Activated CD4-positive, alpha-beta T cell treated with anti-CD3 and anti-CD28 coated beads, Interleukin-2, amount 10 ng/mL, durations not matched to agents 24 days and 14 days (primary cell): ENCODE measurements at regions of chr6 and their contacts with region 1.

Region 1: GRCh38 chr6:149545754-149546528 is at the start of gene PPIL4:
- DNase-seq: peak; percentile 99
- H3K4me3 Mint-ChIP-seq: peak within 1 kb of the TSS; percentile 94
- H3K27ac Mint-ChIP-seq: peak within 1 kb of the TSS; percentile 98
- H3K4me1 Mint-ChIP-seq: peaks cover 22% of the 10 kb centered on the region
- H3K27me3 Mint-ChIP-seq: peaks cover 10% of the 10 kb centered on the region
- total RNA-seq, gene PPIL4: 24.2 and 28.4 TPM in 2 replicates

Region 2: GRCh38 chr6:149387779-149388512 is 158.0 kb before region 1 on chr6:
- intact Hi-C with region 1: no loop called
- DNase-seq: no peak
- H3K4me3 Mint-ChIP-seq: no peak overlapping the region
- H3K27ac Mint-ChIP-seq: peak overlapping the region; percentile 72
- H3K4me1 Mint-ChIP-seq: peaks cover 59% of the 10 kb centered on the region
- H3K27me3 Mint-ChIP-seq: no peaks in the 10 kb centered on the region

Region 3: DNA sequence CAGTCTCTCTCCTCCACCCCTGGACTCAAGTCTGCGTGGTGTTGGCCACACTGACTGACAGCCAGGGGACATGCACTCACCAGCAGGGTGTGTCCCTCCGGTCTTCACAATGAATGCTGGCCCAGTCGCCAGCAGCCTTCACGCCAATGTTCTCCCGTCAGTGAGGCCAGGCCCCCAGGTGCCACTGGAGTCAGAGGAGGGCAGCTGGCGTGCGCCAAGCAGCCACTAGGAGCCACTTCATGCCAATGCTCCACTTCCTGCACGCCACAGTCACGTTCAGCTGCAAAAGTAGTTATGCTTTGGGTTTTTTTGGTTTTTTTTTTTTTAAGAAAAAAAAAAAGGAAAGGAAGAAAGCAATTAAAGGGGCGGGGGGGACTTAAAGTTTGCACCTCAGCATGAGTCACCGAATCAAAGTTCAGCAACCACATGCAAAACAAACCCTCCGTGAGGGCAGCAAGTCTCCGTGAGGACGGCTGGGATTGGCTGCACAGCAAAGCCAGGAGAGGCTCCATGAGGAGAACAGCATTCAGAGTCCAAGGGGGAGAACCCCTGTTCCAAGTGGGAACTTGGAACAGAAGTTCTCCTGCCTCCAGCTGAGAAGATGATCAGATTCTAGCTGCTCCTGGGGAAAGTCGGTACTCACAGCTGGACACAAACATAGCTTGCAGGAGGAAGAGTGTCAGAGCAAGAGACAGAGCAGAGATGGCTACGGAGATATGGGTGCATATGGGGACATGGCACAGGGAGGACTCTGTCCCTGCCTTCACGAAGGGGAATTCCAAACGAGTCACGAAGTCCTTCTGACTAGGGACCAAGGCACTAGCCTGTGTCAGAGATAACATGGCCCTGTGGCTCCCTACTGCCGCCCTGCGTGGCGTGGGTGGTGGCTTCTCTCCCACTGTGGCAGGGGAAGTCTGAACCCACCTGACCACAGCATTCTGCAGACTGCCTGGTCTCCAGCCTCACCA is 60.9 kb before region 1 on chr6 and contains the start of gene ZC3H12D:
- intact Hi-C with region 1: loop called (anchors 1 kb)
- DNase-seq: peak; percentile 94
- H3K4me3 Mint-ChIP-seq: peak within 1 kb of the TSS; percentile 90
- H3K27ac Mint-ChIP-seq: peak within 1 kb of the TSS; percentile 100
- H3K4me1 Mint-ChIP-seq: peaks cover 60% of the 10 kb centered on the region
- H3K27me3 Mint-ChIP-seq: no peaks in the 10 kb centered on the region
- total RNA-seq, gene ZC3H12D: 79.6 and 79.8 TPM in 2 replicates

Region 4: GRCh38 chr6:149648148-149649145 is 102.5 kb after region 1 on chr6 and contains the start of gene KATNA1:
- intact Hi-C with region 1: loop called (anchors 5 kb)
- DNase-seq: peak; percentile 97
- H3K4me3 Mint-ChIP-seq: peak within 1 kb of the TSS; percentile 85
- H3K27ac Mint-ChIP-seq: peak within 1 kb of the TSS; percentile 87
- H3K4me1 Mint-ChIP-seq: peaks cover 23% of the 10 kb centered on the region
- H3K27me3 Mint-ChIP-seq: no peaks in the 10 kb centered on the region
- total RNA-seq, gene KATNA1: 18.9 and 23.0 TPM in 2 replicates

Region 5: GRCh38 chr6:149717588-149718458 is 171.9 kb after region 1 on chr6 and contains the start of gene LATS1:
- intact Hi-C with region 1: loop called (anchors 1 kb)
- DNase-seq: peak; percentile 98
- H3K4me3 Mint-ChIP-seq: peak within 1 kb of the TSS; percentile 98
- H3K27ac Mint-ChIP-seq: peak within 1 kb of the TSS; percentile 98
- H3K4me1 Mint-ChIP-seq: peaks cover 32% of the 10 kb centered on the region
- H3K27me3 Mint-ChIP-seq: no peaks in the 10 kb centered on the region
- total RNA-seq, gene LATS1: 31.8 and 33.7 TPM in 2 replicates

Region 6: GRCh38 chr6:149746147-149746946 is 200.4 kb after region 1 on chr6 and contains the start of gene NUP43:
- intact Hi-C with region 1: loop called (anchors 1 kb)
- DNase-seq: peak; percentile 98
- H3K4me3 Mint-ChIP-seq: peak within 1 kb of the TSS; percentile 99
- H3K27ac Mint-ChIP-seq: peak within 1 kb of the TSS; percentile 94
- H3K4me1 Mint-ChIP-seq: peaks cover 20% of the 10 kb centered on the region
- H3K27me3 Mint-ChIP-seq: no peaks in the 10 kb centered on the region
- total RNA-seq, gene NUP43: 78.9 and 93.7 TPM in 2 replicates

Region 7: GRCh38 chr6:149863697-149864577 is 318.0 kb after region 1 on chr6 and contains the start of gene LRP11:
- intact Hi-C with region 1: loop called (anchors 2 kb)
- DNase-seq: peak; percentile 95
- H3K4me3 Mint-ChIP-seq: peak within 1 kb of the TSS; percentile 83
- H3K27ac Mint-ChIP-seq: no peak within 1 kb of the TSS
- H3K4me1 Mint-ChIP-seq: peaks cover 20% of the 10 kb centered on the region
- H3K27me3 Mint-ChIP-seq: peaks cover 33% of the 10 kb centered on the region
- total RNA-seq, gene LRP11: 3.7 TPM in 2 replicates